ENCODE measurements at regions of chr1 and their contacts with region 1.

Region 1: GRCh38 chr1:168920456-168921094 is 185.9 kb upstream of the ATP1B1 start:
- DNase-seq: peak in 4 of 5 donors; percentile 29 to 59 (median 42)
- ATAC-seq: peak; percentile 40 to 90 (median 86)
- H3K4me3 ChIP-seq: no peak overlapping the region
- H3K27ac ChIP-seq: peak overlapping the region in 11 of 12 donors; percentile 13 to 80 (median 61)
- H3K4me1 ChIP-seq: peaks cover 0 to 38% (median 12%) of the 10 kb centered on the region in 12 donors
- H3K27me3 ChIP-seq: no peaks in the 10 kb centered on the region
- CTCF ChIP-seq: no peak
- POLR2A ChIP-seq: no peak

Region 2: GRCh38 chr1:168483539-168483938 is 437.0 kb before region 1 on chr1:
- intact Hi-C with region 1: no loop called
- DNase-seq: no peak
- ATAC-seq: peak in 1 of 4 donors; percentile 11
- H3K4me3 ChIP-seq: no peak overlapping the region
- H3K27ac ChIP-seq: peak overlapping the region in 4 of 12 donors; percentile 22 to 74 (median 37)
- H3K4me1 ChIP-seq: peaks cover 0 to 40% (median 4%) of the 10 kb centered on the region in 12 donors
- H3K27me3 ChIP-seq: no peaks in the 10 kb centered on the region
- CTCF ChIP-seq: no peak
- POLR2A ChIP-seq: no peak

Region 3: DNA sequence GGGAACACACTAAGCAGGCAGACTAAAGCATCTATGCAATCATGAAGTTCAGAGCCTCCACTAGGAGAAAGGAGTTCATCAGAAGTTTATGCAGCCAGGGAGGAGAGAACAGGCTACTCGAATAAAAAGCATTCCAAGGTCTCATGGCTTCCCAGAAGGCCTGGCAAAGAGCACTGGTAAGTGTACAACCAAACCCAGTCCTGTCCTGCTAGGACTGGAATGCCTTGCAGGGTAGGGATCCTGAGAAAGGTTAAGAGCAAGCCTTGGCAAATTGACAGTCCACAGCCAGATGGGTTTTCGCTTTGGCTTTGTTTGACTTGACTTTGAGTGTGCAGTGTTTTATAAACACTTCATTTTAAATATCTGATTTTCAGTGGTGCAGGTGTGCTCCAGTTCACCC is 52.3 kb after region 1 on chr1:
- intact Hi-C with region 1: loop called in 1 of 10 experiments (anchors 2 kb)
- DNase-seq: no peak
- ATAC-seq: no peak
- H3K4me3 ChIP-seq: no peak overlapping the region
- H3K27ac ChIP-seq: no peak overlapping the region
- H3K4me1 ChIP-seq: peaks cover 0 to 10% (median 5%) of the 10 kb centered on the region in 12 donors
- H3K27me3 ChIP-seq: no peaks in the 10 kb centered on the region
- CTCF ChIP-seq: no peak
- POLR2A ChIP-seq: no peak